Astrocyte of the cerebellum (primary cell): ENCODE measurements at regions of chr7 and their contacts with region 1.

Region 1: DNA sequence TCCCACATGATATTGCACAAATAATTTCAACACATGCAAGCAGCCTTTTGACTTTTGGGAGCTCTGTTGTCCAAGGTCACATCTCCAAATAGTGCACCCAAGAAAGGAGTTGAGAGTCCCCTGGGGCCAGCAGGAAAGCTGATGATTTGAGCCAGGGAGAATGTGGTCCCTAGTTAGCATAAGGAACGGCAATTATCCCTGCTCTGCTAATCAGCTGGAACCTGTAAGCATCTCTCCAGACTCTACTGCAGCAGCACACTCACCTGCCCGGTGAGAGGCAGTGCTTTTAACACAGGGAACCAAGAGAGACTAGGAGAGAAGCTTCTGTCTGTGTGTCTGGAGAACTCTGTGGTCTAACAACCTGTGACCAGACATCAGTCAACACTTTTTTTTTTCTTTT is 17.0 kb downstream of the TRPV5 start:
- DNase-seq: no peak
- H3K4me3 ChIP-seq: no peak overlapping the region
- CTCF ChIP-seq: no peak

Region 2: DNA sequence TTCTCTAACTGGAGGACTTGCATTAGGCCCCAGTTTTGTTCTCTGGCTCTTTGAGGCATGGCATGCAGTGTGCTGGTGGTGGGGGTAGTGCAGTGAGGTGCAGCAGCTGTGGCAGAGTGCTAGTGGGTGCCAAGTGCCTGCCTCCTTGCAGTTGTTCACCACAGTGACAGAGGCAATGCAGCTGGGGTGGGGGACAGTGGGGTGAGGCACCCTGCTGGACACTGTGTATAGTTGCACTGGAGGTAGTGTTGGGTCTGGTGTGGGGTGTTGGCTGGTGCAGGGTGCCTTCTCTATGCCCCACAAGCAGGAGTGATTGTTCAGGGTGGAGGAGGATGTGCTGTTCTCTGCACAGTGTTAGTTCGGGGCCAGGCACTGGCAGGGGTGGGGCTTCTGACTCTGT is 67.3 kb after region 1 on chr7:
- in situ Hi-C with region 1: loop called (anchors 5 kb)
- DNase-seq: no peak
- H3K4me3 ChIP-seq: no peak overlapping the region
- CTCF ChIP-seq: no peak

Region 3: DNA sequence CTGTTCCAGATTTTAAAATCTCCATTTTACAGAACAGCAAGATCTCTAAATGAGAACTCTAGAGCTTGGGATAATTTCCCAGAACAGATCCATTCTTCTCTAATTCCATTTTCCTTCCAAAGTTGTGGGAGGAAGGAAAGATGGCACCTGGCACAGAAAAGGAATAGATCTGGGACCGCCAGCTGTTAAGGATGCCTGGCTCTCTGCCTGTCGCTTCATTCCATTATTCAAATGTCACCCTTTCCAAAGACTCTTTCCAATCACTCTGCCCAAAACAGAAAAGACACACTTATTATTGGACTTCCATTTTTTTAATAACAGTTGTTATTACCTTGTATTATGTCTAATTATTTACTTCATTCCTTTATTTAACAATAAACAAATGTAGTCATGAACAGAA is 111.2 kb after region 1 on chr7:
- in situ Hi-C with region 1: no loop called
- DNase-seq: no peak
- H3K4me3 ChIP-seq: no peak overlapping the region
- CTCF ChIP-seq: no peak

Region 4: GRCh38 chr7:143205560-143206293 is 289.2 kb after region 1 on chr7:
- in situ Hi-C with region 1: no loop called
- DNase-seq: no peak
- H3K4me3 ChIP-seq: no peak overlapping the region
- CTCF ChIP-seq: no peak